BJ (cell line): ENCODE measurements at regions of chr18 and their contacts with region 1.

Region 1: GRCh38 chr18:59631583-59632181 is 65.5 kb downstream of the CCBE1 start:
- DNase-seq: no peak
- H3K4me3 ChIP-seq: no peak overlapping the region
- H3K27me3 ChIP-seq: no peaks in the 10 kb centered on the region
- CTCF ChIP-seq: peak; percentile 84

Region 2: GRCh38 chr18:58928386-58928785 is 703.3 kb before region 1 on chr18:
- CTCF ChIA-PET with region 1: no interaction called
- POLR2A ChIA-PET with region 1: no interaction called
- DNase-seq: no peak
- H3K4me3 ChIP-seq: no peak overlapping the region
- H3K27me3 ChIP-seq: no peaks in the 10 kb centered on the region
- CTCF ChIP-seq: no peak

Region 3: DNA sequence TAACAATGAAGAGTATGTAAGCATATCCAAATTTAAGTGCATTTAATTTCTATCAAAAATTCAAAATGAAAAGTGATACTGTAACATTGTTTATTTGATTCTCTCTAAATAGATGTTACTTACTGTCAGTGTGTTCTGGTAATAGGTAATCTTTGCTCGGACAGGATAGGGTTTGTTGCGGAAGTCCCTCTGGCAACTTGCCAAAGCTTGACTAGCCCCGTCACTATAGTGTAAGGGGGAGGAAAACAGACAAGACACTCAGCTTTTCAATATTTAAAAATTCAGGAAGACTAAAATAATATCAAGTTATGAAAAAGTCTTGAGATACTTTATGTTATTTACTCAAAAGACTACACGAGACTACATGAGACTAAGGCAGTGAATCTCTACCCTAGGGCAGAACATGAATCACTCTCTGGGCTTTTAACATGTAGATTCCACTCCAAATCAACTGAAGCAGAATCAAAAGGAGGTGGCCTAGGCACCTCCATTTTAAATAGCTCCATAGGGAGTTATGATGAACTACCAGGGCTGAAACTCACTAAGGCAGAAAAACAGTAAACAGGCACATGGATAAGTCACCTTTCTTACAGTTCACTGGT is 278.5 kb before region 1 on chr18:
- CTCF ChIA-PET with region 1: no interaction called
- POLR2A ChIA-PET with region 1: no interaction called
- DNase-seq: no peak
- H3K4me3 ChIP-seq: no peak overlapping the region
- H3K27me3 ChIP-seq: no peaks in the 10 kb centered on the region
- CTCF ChIP-seq: no peak

Region 4: DNA sequence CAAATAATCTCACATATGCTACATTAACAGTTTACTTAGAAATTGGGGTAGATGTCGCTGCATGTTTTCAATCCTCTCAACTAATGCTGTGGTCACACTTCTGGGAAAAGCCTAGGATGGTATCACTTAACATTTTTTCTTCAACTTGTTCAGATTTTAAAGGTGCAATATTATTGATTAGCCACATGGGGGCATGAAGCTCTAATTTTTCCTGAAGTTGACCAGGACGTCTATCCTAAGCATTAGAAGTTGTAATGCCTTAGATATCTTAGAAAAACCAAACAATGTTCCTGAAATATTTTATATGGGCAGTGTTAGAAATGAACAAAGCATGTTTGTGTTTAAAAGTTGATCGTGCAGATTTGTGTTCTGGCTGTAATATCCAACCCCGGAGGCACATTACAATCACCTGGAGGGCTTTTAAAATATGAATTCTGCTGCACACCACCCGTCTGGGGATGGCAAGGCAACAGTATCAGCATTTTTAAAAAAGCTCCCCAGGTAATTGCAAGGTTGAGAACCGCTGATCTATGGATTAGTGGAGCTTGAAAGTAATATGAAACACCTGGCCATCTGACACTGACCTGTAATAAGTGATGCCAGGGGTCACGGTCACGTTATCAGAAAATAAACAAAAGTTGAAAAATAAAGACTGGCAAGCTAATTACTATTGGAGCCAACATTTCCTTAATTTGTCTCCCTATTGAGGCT is 172.2 kb before region 1 on chr18:
- CTCF ChIA-PET with region 1: interaction called, 27 read pairs
- POLR2A ChIA-PET with region 1: no interaction called
- DNase-seq: no peak
- H3K4me3 ChIP-seq: no peak overlapping the region
- H3K27me3 ChIP-seq: no peaks in the 10 kb centered on the region
- CTCF ChIP-seq: peak; percentile 54

Region 5: GRCh38 chr18:59617468-59617932 is 14.2 kb before region 1 on chr18:
- CTCF ChIA-PET with region 1: interaction called, 10 read pairs
- POLR2A ChIA-PET with region 1: no interaction called
- DNase-seq: no peak
- H3K4me3 ChIP-seq: no peak overlapping the region
- H3K27me3 ChIP-seq: no peaks in the 10 kb centered on the region
- CTCF ChIP-seq: no peak

Region 6: DNA sequence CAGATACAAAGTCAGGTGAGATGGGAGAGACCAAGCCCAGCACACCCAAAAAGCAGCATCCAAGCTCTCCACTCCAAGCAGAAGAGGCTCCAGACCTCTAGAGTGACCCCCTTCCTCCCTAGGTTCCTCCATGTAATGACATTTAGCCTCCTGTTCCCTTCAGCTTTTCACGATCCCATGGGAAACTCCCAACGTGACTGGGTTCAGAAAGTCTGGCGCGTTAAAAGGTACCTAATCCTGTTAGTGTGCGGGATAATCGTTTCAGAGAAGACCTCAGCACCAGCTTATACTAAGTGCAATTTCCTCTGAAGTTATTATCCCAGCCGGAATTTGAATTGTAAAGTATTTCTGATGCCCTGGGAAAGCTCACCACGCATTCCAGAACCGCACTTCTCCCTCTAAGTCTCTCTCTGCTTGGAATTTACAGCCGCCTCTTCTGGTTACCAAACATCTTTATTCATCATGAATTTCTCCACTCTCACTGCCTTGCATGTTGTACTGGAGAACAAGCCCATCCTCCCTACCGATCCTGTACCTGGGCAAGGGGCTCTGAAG is 18.7 kb after region 1 on chr18:
- CTCF ChIA-PET with region 1: interaction called, 24 read pairs
- POLR2A ChIA-PET with region 1: no interaction called
- DNase-seq: no peak
- H3K4me3 ChIP-seq: no peak overlapping the region
- H3K27me3 ChIP-seq: no peaks in the 10 kb centered on the region
- CTCF ChIP-seq: no peak

Region 7: DNA sequence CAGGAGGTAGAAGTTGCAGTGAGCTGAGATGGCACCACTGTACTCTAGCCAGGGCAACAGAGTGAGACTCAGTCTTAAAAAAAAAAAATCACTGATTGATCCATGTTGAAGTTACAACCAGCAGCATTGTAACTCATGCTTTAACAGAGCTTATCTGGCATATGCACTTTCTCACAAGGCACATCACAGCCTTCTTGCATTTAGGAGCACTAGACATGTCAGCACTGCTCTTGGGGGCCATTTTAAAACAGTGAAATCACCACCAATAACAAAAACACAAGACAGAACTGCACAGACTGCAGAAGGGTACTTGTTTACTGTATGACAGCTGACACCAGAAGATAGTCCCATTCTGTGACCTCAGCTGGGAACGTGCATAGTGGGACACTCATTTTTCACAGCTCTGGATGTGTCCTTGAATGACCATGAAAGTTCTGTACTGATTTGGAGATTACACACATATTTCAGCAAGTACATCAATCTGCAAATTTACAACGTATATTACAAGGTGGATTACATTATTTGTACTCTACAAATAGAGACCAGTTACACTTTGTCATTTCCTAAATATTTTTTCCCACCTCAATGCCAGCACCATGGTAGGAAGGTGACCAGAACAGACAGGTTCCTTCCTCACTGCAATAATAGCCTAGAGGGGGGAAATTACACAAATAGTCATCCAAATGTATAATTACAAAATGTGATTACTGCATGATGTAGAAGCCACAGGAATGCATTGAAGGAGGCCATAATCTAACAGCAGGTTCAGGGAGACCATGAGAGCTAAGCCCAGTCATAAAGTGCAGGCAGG is 30.4 kb after region 1 on chr18:
- CTCF ChIA-PET with region 1: interaction called, 14 read pairs
- POLR2A ChIA-PET with region 1: no interaction called
- DNase-seq: no peak
- H3K4me3 ChIP-seq: no peak overlapping the region
- H3K27me3 ChIP-seq: no peaks in the 10 kb centered on the region
- CTCF ChIP-seq: no peak

Region 8: GRCh38 chr18:59705145-59705544 is 73.5 kb after region 1 on chr18:
- CTCF ChIA-PET with region 1: interaction called, 15 read pairs
- POLR2A ChIA-PET with region 1: no interaction called
- DNase-seq: no peak
- H3K4me3 ChIP-seq: no peak overlapping the region
- H3K27me3 ChIP-seq: no peaks in the 10 kb centered on the region
- CTCF ChIP-seq: no peak

Region 9: DNA sequence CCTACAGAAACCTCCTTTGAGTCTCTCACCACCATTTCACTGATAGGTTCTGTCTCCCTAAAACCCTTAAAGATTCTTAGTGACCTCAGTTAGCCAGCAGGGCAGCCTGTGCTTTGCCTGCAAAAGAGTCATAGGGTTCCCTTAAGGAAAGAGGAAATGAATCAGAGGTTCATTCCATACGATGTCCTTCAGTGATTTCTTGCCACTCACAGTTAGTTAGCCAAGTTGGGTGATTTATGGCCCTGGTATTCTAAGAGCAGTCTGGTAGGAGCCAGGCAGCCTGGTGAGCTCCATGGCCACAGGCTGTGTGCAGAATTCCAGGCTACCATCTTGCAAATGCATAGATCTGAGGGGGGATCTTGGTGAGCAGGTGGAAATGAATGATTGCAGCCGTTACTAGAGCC is 84.3 kb after region 1 on chr18:
- CTCF ChIA-PET with region 1: interaction called, 14 read pairs
- POLR2A ChIA-PET with region 1: no interaction called
- DNase-seq: no peak
- H3K4me3 ChIP-seq: no peak overlapping the region
- H3K27me3 ChIP-seq: no peaks in the 10 kb centered on the region
- CTCF ChIP-seq: peak; percentile 12; the same call in 1 of the 2 replicates